ENCODE measurements at regions of chr6 and their contacts with region 1.

Region 1: DNA sequence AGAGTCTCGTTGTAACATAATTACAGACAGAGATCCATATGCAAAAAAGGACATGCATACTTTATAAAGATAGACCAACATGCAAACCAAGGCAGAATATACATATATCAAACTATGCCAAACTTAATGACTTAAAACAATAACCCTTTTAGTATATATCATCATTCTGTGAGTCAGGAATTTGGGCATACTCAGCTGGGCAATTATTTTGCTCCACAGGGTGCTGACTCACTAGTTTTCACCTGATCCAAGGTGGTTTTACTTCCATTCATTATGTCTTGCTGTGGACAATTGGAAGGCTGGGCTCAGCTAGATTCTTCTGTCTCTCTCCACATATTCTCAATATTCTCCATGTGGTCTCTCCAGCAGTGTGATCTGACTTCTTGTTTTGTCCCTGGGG is 41.2 kb upstream of the RNF146 start:
- DNase-seq: no peak
- H3K4me3 Mint-ChIP-seq: no peak overlapping the region
- H3K27ac Mint-ChIP-seq: no peak overlapping the region
- H3K4me1 Mint-ChIP-seq: no peaks in the 10 kb centered on the region
- H3K27me3 Mint-ChIP-seq: peaks cover 25% of the 10 kb centered on the region

Region 2: GRCh38 chr6:127212376-127212775 is 13.1 kb before region 1 on chr6:
- CTCF ChIA-PET with region 1: no interaction called
- POLR2A ChIA-PET with region 1: no interaction called
- intact Hi-C with region 1: no loop called
- DNase-seq: no peak
- H3K4me3 Mint-ChIP-seq: no peak overlapping the region
- H3K27ac Mint-ChIP-seq: no peak overlapping the region
- H3K4me1 Mint-ChIP-seq: no peaks in the 10 kb centered on the region
- H3K27me3 Mint-ChIP-seq: peaks cover 17% of the 10 kb centered on the region

Region 3: GRCh38 chr6:127641905-127642304 is 416.4 kb after region 1 on chr6:
- CTCF ChIA-PET with region 1: no interaction called
- POLR2A ChIA-PET with region 1: no interaction called
- intact Hi-C with region 1: loop called (anchors 5 kb)
- DNase-seq: peak; percentile 16
- H3K4me3 Mint-ChIP-seq: no peak overlapping the region
- H3K27ac Mint-ChIP-seq: no peak overlapping the region
- H3K4me1 Mint-ChIP-seq: no peaks in the 10 kb centered on the region
- H3K27me3 Mint-ChIP-seq: no peaks in the 10 kb centered on the region

Measured in activated CD4-positive, alpha-beta memory T cell treated with anti-CD3 and anti-CD28 coated beads for 36 hours (primary cell).